Dendritic cell treated with granulocyte-macrophage colony-stimulating factor and Interleukin-4, amounts not matched to agents 40 ng/mL and 50 ng/mL, for 4 days (primary cell): ENCODE measurements at regions of chr5 and their contacts with region 1.

Region 1: GRCh38 chr5:88883059-88883835 is at the start of gene MEF2C:
- H3K4me3 Mint-ChIP-seq: peak within 1 kb of the TSS; percentile 87
- H3K27ac Mint-ChIP-seq: peak within 1 kb of the TSS; percentile 87
- H3K4me1 Mint-ChIP-seq: peaks cover 2% of the 10 kb centered on the region
- H3K27me3 Mint-ChIP-seq: no peaks in the 10 kb centered on the region

Region 2: GRCh38 chr5:88761269-88761850 is 121.9 kb before region 1 on chr5:
- intact Hi-C with region 1: loop called (anchors 10 kb)
- H3K4me3 Mint-ChIP-seq: peak overlapping the region; percentile 66
- H3K27ac Mint-ChIP-seq: peak overlapping the region; percentile 87
- H3K4me1 Mint-ChIP-seq: peaks cover 21% of the 10 kb centered on the region
- H3K27me3 Mint-ChIP-seq: no peaks in the 10 kb centered on the region

Region 3: DNA sequence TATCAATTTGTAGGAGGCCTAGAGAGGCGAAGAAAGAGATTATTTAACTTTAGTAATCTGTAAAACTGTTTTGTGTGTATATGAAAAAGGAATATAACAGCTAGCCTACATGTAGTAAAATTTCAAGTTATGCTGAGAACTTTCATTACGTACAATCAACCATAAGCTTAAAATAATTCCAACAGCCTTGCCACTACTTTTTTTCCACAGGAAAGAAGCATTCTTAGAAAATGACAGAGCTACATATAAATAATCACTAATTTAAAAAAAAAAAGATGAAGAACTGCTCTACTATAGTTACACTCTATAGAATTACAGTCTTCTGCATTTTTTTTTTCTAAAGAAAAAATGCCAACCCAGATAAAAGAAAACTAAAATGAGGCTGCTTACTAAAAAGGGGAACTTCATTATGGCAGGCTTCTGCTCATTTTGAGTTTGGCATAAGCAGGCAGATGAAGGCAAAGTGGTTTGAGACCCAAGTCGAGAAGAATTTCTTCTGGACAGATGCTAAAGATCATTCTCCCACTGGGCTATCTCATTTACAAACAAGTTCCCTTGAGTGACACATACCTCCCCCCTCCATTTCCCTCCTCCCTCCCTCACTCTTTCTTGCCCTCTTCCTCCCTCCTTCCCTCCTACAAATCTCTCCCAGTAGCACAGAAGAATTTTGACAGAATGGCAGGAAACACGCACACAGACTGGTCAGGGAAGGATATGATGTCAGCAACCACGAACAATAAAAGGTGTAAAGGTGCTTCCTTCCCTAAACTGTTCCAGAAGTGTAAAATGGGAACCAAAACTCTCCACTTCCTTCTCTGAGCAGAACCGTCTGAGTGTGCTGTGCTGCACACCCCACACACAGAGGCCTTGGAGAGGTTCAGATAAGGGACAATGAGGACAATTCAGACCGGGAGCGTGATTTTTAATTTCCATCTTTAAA is 56.3 kb before region 1 on chr5:
- intact Hi-C with region 1: loop called (anchors 2 kb)
- H3K4me3 Mint-ChIP-seq: peak overlapping the region; percentile 45
- H3K27ac Mint-ChIP-seq: peak overlapping the region; percentile 87
- H3K4me1 Mint-ChIP-seq: peaks cover 53% of the 10 kb centered on the region
- H3K27me3 Mint-ChIP-seq: no peaks in the 10 kb centered on the region

Region 4: GRCh38 chr5:88845081-88845697 is 38.1 kb before region 1 on chr5:
- intact Hi-C with region 1: loop called (anchors 5 kb)
- H3K4me3 Mint-ChIP-seq: no peak overlapping the region
- H3K27ac Mint-ChIP-seq: no peak overlapping the region
- H3K4me1 Mint-ChIP-seq: peaks cover 11% of the 10 kb centered on the region
- H3K27me3 Mint-ChIP-seq: no peaks in the 10 kb centered on the region

Region 5: DNA sequence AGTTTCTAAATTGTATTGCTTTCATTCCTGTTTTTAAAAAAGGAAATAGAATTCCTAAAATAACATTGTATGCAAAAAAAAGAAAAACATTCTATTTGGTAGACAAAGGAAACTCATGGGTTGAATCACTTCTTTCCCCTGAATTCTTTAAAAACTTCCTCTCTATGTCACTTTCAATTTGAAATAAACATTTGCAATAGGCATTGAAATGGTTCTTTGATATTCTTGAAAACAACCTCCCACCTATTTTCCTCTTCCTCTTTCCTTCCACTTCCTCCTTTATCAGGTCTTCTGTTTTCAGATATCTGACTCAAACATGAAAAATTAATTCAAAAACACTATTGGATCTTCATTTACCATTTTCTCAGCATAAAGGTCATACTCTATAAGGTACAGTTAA is 441.7 kb after region 1 on chr5:
- intact Hi-C with region 1: no loop called
- H3K4me3 Mint-ChIP-seq: no peak overlapping the region
- H3K27ac Mint-ChIP-seq: no peak overlapping the region
- H3K4me1 Mint-ChIP-seq: peaks cover 16% of the 10 kb centered on the region
- H3K27me3 Mint-ChIP-seq: no peaks in the 10 kb centered on the region

Region 6: GRCh38 chr5:90529194-90529938 is 1646.1 kb after region 1 on chr5 and contains the start of gene LYSMD3:
- intact Hi-C with region 1: loop called (anchors 10 kb)
- H3K4me3 Mint-ChIP-seq: peak within 1 kb of the TSS; percentile 95
- H3K27ac Mint-ChIP-seq: peak within 1 kb of the TSS; percentile 95
- H3K4me1 Mint-ChIP-seq: peaks cover 31% of the 10 kb centered on the region
- H3K27me3 Mint-ChIP-seq: peaks cover 8% of the 10 kb centered on the region